Activated CD4-positive, alpha-beta memory T cell treated with anti-CD3 and anti-CD28 coated beads for 36 hours (primary cell): ENCODE measurements at regions of chr15 and their contacts with region 1.

Region 1: GRCh38 chr15:63504247-63504978 is at the start of gene USP3:
- DNase-seq: peak; percentile 95
- H3K4me3 Mint-ChIP-seq: peak within 1 kb of the TSS; percentile 90
- H3K27ac Mint-ChIP-seq: peak within 1 kb of the TSS; percentile 99
- H3K4me1 Mint-ChIP-seq: peaks cover 80% of the 10 kb centered on the region
- H3K27me3 Mint-ChIP-seq: no peaks in the 10 kb centered on the region
- total RNA-seq, gene USP3: 46.1 to 48.9 TPM

Region 2: GRCh38 chr15:63212050-63213004 is 292.1 kb before region 1 on chr15:
- CTCF ChIA-PET with region 1: no interaction called
- POLR2A ChIA-PET with region 1: no interaction called
- intact Hi-C with region 1: loop called (anchors 5 kb)
- DNase-seq: no peak
- H3K4me3 Mint-ChIP-seq: peak overlapping the region; percentile 64
- H3K27ac Mint-ChIP-seq: peak overlapping the region; percentile 97
- H3K4me1 Mint-ChIP-seq: peaks cover 83% of the 10 kb centered on the region
- H3K27me3 Mint-ChIP-seq: no peaks in the 10 kb centered on the region

Region 3: DNA sequence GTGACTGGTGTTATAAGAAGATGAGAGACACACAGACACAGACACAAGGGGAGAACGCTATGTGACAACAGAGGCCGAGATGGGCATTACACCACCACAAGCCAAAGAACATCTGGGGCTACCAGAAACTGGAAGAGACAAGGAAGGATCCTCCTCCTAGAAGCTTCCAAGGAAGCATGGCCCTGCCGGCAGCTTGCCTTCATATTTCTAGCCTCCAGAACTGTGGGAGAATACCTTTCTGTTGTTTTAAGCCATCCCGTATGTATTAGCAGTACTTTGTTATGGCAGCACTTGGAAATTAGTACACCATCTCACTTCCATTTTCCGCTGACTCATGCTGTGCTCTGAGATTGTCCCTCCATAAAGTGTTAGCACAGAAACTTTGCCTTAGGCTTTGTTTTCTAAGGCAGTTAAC is 84.1 kb before region 1 on chr15:
- CTCF ChIA-PET with region 1: no interaction called
- POLR2A ChIA-PET with region 1: no interaction called
- intact Hi-C with region 1: no loop called
- DNase-seq: no peak
- H3K4me3 Mint-ChIP-seq: no peak overlapping the region
- H3K27ac Mint-ChIP-seq: no peak overlapping the region
- H3K4me1 Mint-ChIP-seq: no peaks in the 10 kb centered on the region
- H3K27me3 Mint-ChIP-seq: no peaks in the 10 kb centered on the region

Region 4: GRCh38 chr15:63481105-63481810 is 23.2 kb before region 1 on chr15:
- CTCF ChIA-PET with region 1: interaction called, 19 read pairs
- POLR2A ChIA-PET with region 1: interaction called, 23 read pairs
- intact Hi-C with region 1: loop called (anchors 1 kb)
- DNase-seq: peak; percentile 73
- H3K4me3 Mint-ChIP-seq: no peak overlapping the region
- H3K27ac Mint-ChIP-seq: peak overlapping the region; percentile 85
- H3K4me1 Mint-ChIP-seq: peaks cover 80% of the 10 kb centered on the region
- H3K27me3 Mint-ChIP-seq: no peaks in the 10 kb centered on the region

Region 5: GRCh38 chr15:63514531-63514943 is 10.1 kb after region 1 on chr15:
- CTCF ChIA-PET with region 1: interaction called, 7 read pairs
- POLR2A ChIA-PET with region 1: interaction called, 5 read pairs
- intact Hi-C with region 1: loop called (anchors 1 kb)
- DNase-seq: no peak
- H3K4me3 Mint-ChIP-seq: peak overlapping the region; percentile 6
- H3K27ac Mint-ChIP-seq: peak overlapping the region; percentile 72
- H3K4me1 Mint-ChIP-seq: peaks cover 87% of the 10 kb centered on the region
- H3K27me3 Mint-ChIP-seq: no peaks in the 10 kb centered on the region

Region 6: DNA sequence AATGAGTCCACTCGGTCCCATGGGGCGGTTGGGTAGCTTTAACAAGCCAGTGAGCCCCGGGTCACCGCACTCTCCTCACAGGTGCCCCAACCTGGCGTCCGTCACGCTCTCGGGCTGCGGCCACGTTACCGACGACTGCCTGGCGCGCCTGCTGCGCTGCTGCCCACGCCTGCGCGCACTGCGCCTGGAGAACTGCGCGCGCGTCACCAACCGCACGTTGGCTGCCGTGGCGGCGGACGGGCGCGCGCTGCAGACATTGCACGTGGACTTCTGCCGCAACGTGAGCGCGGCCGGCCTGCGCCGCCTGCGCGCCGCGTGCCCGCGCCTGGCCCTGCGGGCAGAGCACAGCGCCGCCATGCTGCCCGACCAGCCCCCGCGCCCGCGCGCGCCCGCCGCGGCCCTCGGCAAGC is 96.2 kb after region 1 on chr15:
- CTCF ChIA-PET with region 1: interaction called, 36 read pairs
- POLR2A ChIA-PET with region 1: interaction called, 29 read pairs
- intact Hi-C with region 1: loop called (anchors 1 kb)
- DNase-seq: peak; percentile 93
- H3K4me3 Mint-ChIP-seq: peak overlapping the region; percentile 93
- H3K27ac Mint-ChIP-seq: peak overlapping the region; percentile 96
- H3K4me1 Mint-ChIP-seq: peaks cover 54% of the 10 kb centered on the region
- H3K27me3 Mint-ChIP-seq: no peaks in the 10 kb centered on the region